ENCODE measurements at regions of chr5 and their contacts with region 1.

Region 1: GRCh38 chr5:90529194-90529938 is at the start of gene LYSMD3:
- DNase-seq: peak; percentile 99
- ATAC-seq: peak; percentile 100
- total RNA-seq, gene LYSMD3: 18.6 TPM

Region 2: DNA sequence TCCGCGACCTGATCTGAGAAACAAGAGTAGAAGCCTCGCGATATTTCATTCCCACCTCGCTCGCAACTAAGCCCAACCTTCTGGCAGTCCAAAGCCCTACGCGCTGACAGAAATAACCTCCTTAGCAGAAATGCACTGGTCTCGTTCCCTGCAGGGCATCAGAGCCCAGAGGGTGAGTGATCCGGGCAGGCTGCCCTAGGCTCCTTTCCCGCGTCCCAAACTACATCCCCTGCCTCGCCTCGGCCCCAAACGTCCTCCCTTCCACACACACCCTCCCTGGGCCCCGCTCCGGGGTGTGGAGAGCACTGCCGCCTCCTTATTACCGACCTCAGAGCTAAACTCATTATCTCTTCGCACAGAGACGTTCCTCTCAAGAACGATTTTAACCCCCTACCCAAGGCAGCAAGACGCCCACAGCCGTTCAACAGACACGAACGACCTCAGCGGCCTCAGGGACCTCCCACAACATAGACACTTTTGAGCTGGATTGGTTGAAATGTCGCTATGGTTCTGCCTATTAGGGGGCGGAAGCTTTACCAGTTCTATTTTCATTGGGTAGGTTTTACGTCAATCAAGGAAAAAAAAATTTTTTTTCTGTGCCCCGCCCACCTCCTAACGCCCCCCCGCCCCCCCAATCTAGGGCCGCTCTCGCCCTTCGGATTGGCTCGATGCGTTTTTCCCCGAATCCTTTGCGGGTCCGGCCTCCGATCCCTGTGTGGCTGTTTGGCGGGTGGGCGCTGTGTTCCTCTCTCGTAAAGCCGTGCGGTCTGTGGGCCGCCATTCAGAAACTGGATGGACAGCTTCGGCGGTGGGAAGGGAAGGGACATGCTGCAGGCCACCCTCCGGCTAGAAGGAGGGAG is 119.8 kb before region 1 on chr5 and contains the start of gene CETN3:
- intact Hi-C with region 1: loop called (anchors 1 kb)
- DNase-seq: peak; percentile 96
- ATAC-seq: peak; percentile 99
- total RNA-seq, gene CETN3: 27.9 TPM

Region 3: DNA sequence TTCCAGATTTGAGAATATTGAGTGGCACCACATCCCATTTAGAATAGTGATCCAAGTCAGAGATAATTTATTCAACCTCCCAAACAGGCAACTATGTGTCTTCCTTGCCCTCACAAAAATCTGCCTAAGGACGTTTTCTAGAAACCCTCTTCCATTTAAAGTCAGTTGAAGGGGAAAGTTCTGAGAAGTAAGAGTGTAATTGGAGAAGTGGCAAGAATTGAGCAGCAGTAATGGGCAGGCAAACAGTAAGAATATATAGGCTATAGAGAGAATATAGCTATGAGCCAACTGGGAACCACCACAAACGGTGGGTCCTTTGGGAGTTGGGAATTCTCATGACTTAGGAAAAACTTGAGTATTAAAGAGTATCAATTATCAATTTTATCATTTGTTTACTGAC is 88.7 kb before region 1 on chr5:
- intact Hi-C with region 1: loop called (anchors 1 kb)
- DNase-seq: no peak
- ATAC-seq: no peak

Region 4: GRCh38 chr5:90474235-90475109 is 54.9 kb before region 1 on chr5 and contains the starts of genes MBLAC2 and POLR3G:
- intact Hi-C with region 1: loop called (anchors 2 kb)
- DNase-seq: peak; percentile 94
- ATAC-seq: peak; percentile 98
- total RNA-seq, gene MBLAC2: 4.0 TPM
- total RNA-seq, gene POLR3G: 0.68 TPM

Region 5: GRCh38 chr5:90503596-90503995 is 25.8 kb before region 1 on chr5:
- intact Hi-C with region 1: no loop called
- DNase-seq: no peak
- ATAC-seq: no peak